Activated T-helper 2 cell treated with anti-CD3 and anti-CD28 coated beads, Interferon-gamma antibody, Interleukin-2, Interleukin-4, amounts not matched to agents 10 μg/mL and 5 μg/mL and 100 μg/mL, durations not matched to agents 14 hours and 24 hours and 36 hours (primary cell): ENCODE measurements at regions of chr6 and their contacts with region 1.

Region 1: GRCh38 chr6:40912158-40912946 is 126.7 kb downstream of the UNC5CL start:
- DNase-seq: peak; percentile 35
- H3K4me3 Mint-ChIP-seq: no peak overlapping the region
- H3K27ac Mint-ChIP-seq: no peak overlapping the region
- H3K4me1 Mint-ChIP-seq: peaks cover 12% of the 10 kb centered on the region
- H3K27me3 Mint-ChIP-seq: peaks cover 24% of the 10 kb centered on the region

Region 2: GRCh38 chr6:40550202-40551101 is 361.9 kb before region 1 on chr6:
- intact Hi-C with region 1: loop called (anchors 5 kb)
- DNase-seq: peak; percentile 12
- H3K4me3 Mint-ChIP-seq: no peak overlapping the region
- H3K27ac Mint-ChIP-seq: no peak overlapping the region
- H3K4me1 Mint-ChIP-seq: no peaks in the 10 kb centered on the region
- H3K27me3 Mint-ChIP-seq: peaks cover 4% of the 10 kb centered on the region

Region 3: GRCh38 chr6:40762981-40763380 is 149.4 kb before region 1 on chr6:
- intact Hi-C with region 1: no loop called
- DNase-seq: no peak
- H3K4me3 Mint-ChIP-seq: no peak overlapping the region
- H3K27ac Mint-ChIP-seq: no peak overlapping the region
- H3K4me1 Mint-ChIP-seq: no peaks in the 10 kb centered on the region
- H3K27me3 Mint-ChIP-seq: peaks cover 12% of the 10 kb centered on the region

Region 4: DNA sequence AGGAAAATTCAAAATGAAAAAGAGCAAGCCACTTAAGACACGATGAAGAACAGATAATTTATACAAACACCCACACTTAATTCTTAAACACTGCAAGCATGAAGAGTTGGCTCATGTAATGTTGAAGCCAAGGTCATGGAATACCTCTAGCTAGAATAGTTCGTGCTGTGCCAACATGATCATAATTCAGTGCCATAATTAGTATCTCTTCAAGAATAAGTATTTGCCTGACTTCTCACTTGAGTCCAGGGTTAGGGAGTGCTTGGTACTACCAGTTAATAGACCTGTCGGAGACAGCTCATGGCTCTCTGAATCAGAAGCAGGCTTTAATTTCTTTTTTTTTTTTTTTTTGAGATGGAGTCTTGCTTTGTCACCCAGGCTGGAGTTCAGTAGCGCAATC is 79.7 kb before region 1 on chr6:
- intact Hi-C with region 1: no loop called
- DNase-seq: no peak
- H3K4me3 Mint-ChIP-seq: no peak overlapping the region
- H3K27ac Mint-ChIP-seq: no peak overlapping the region
- H3K4me1 Mint-ChIP-seq: no peaks in the 10 kb centered on the region
- H3K27me3 Mint-ChIP-seq: peaks cover 43% of the 10 kb centered on the region